ENCODE measurements at regions of chr10 and their contacts with region 1.

Region 1: GRCh38 chr10:89426230-89426868 is 12.0 kb downstream of the IFIT5 start:
- DNase-seq: peak in 4 of 9 donors; percentile 23 to 38 (median 28)
- ATAC-seq: peak; percentile 81
- H3K4me3 ChIP-seq: no peak overlapping the region
- H3K4me3 Mint-ChIP-seq: no peak overlapping the region
- H3K27ac ChIP-seq: no peak overlapping the region
- H3K27ac Mint-ChIP-seq: no peak overlapping the region
- H3K4me1 ChIP-seq: no peaks in the 10 kb centered on the region
- H3K4me1 Mint-ChIP-seq: peaks cover under 1 to 8% (median 3%) of the 10 kb centered on the region in 7 donors
- H3K27me3 ChIP-seq: no peaks in the 10 kb centered on the region
- H3K27me3 Mint-ChIP-seq: peaks cover 0 to 16% (median 4%) of the 10 kb centered on the region in 5 donors

Region 2: GRCh38 chr10:88865281-88865876 is 561.0 kb before region 1 on chr10:
- CTCF ChIA-PET with region 1: no interaction called
- POLR2A ChIA-PET with region 1: no interaction called
- intact Hi-C with region 1: no loop called
- DNase-seq: no peak
- ATAC-seq: no peak
- H3K4me3 ChIP-seq: no peak overlapping the region
- H3K4me3 Mint-ChIP-seq: no peak overlapping the region
- H3K27ac ChIP-seq: no peak overlapping the region
- H3K27ac Mint-ChIP-seq: no peak overlapping the region
- H3K4me1 ChIP-seq: no peaks in the 10 kb centered on the region
- H3K4me1 Mint-ChIP-seq: peaks cover 0 to 10% (median 0%) of the 10 kb centered on the region in 7 donors
- H3K27me3 ChIP-seq: no peaks in the 10 kb centered on the region
- H3K27me3 Mint-ChIP-seq: peaks cover 0 to 37% (median 14%) of the 10 kb centered on the region in 5 donors

Region 3: GRCh38 chr10:90787393-90788198 is 1361.2 kb after region 1 on chr10:
- CTCF ChIA-PET with region 1: no interaction called
- POLR2A ChIA-PET with region 1: no interaction called
- intact Hi-C with region 1: loop called in 1 of 2 experiments (anchors 5 kb)
- DNase-seq: peak in 5 of 9 donors; percentile 2 to 24 (median 15)
- ATAC-seq: peak; percentile 37
- H3K4me3 ChIP-seq: no peak overlapping the region
- H3K4me3 Mint-ChIP-seq: no peak overlapping the region
- H3K27ac ChIP-seq: no peak overlapping the region
- H3K27ac Mint-ChIP-seq: no peak overlapping the region
- H3K4me1 ChIP-seq: no peaks in the 10 kb centered on the region
- H3K4me1 Mint-ChIP-seq: peaks cover 0 to 3% (median 0%) of the 10 kb centered on the region in 7 donors
- H3K27me3 ChIP-seq: no peaks in the 10 kb centered on the region
- H3K27me3 Mint-ChIP-seq: peaks cover under 1 to 15% (median 9%) of the 10 kb centered on the region in 5 donors

Measured in naive thymus-derived CD4-positive, alpha-beta T cell (primary cell).